ENCODE measurements at regions of chr11 and their contacts with region 1.

Region 1: DNA sequence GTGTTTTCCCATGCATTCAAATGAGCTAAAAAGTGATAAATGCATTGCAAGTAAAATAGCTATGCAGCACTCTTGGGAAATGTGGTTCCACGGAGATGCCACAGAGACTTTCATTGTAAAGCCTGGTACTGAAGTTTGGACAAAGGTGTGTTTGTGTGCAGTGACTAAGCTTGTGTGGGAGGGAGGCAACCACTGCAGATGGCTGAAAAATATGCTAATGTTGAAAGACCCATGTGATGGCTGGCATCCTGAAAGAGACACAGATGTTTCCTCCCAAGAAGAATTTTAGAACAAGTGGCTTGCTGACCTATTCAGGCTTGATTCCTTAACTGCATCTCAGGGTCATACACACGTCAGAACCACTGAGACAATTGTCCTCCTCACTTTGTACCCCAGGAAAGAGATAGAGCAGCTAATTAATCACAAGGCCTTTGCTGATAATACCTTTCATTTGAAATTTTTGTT is 73.8 kb downstream of the FAM76B start:
- DNase-seq: peak; percentile 51
- H3K4me3 Mint-ChIP-seq: no peak overlapping the region
- H3K27ac Mint-ChIP-seq: peak overlapping the region; percentile 75
- H3K4me1 Mint-ChIP-seq: peaks cover 37% of the 10 kb centered on the region
- H3K27me3 Mint-ChIP-seq: no peaks in the 10 kb centered on the region
- CTCF ChIP-seq: no peak

Region 2: GRCh38 chr11:95608093-95608492 is 107.7 kb before region 1 on chr11:
- CTCF ChIA-PET with region 1: no interaction called
- intact Hi-C with region 1: no loop called
- DNase-seq: no peak
- H3K4me3 Mint-ChIP-seq: no peak overlapping the region
- H3K27ac Mint-ChIP-seq: no peak overlapping the region
- H3K4me1 Mint-ChIP-seq: no peaks in the 10 kb centered on the region
- H3K27me3 Mint-ChIP-seq: no peaks in the 10 kb centered on the region
- CTCF ChIP-seq: no peak

Region 3: GRCh38 chr11:95641495-95641894 is 74.3 kb before region 1 on chr11:
- CTCF ChIA-PET with region 1: no interaction called
- intact Hi-C with region 1: no loop called
- DNase-seq: no peak
- H3K4me3 Mint-ChIP-seq: no peak overlapping the region
- H3K27ac Mint-ChIP-seq: no peak overlapping the region
- H3K4me1 Mint-ChIP-seq: no peaks in the 10 kb centered on the region
- H3K27me3 Mint-ChIP-seq: no peaks in the 10 kb centered on the region
- CTCF ChIP-seq: no peak

Region 4: GRCh38 chr11:95705485-95706124 is 10.2 kb before region 1 on chr11:
- CTCF ChIA-PET with region 1: interaction called, 18 read pairs
- intact Hi-C with region 1: no loop called
- DNase-seq: peak; percentile 84
- H3K4me3 Mint-ChIP-seq: no peak overlapping the region
- H3K27ac Mint-ChIP-seq: no peak overlapping the region
- H3K4me1 Mint-ChIP-seq: peaks cover under 1% of the 10 kb centered on the region
- H3K27me3 Mint-ChIP-seq: no peaks in the 10 kb centered on the region
- CTCF ChIP-seq: peak; percentile 65

Region 5: GRCh38 chr11:95739108-95739938 is 23.5 kb after region 1 on chr11:
- CTCF ChIA-PET with region 1: no interaction called
- intact Hi-C with region 1: no loop called
- DNase-seq: no peak
- H3K4me3 Mint-ChIP-seq: no peak overlapping the region
- H3K27ac Mint-ChIP-seq: no peak overlapping the region
- H3K4me1 Mint-ChIP-seq: no peaks in the 10 kb centered on the region
- H3K27me3 Mint-ChIP-seq: no peaks in the 10 kb centered on the region
- CTCF ChIP-seq: no peak

Region 6: GRCh38 chr11:95764267-95764898 is 48.6 kb after region 1 on chr11:
- CTCF ChIA-PET with region 1: interaction called, 5 read pairs
- intact Hi-C with region 1: loop called (anchors 2 kb)
- DNase-seq: no peak
- H3K4me3 Mint-ChIP-seq: no peak overlapping the region
- H3K27ac Mint-ChIP-seq: no peak overlapping the region
- H3K4me1 Mint-ChIP-seq: no peaks in the 10 kb centered on the region
- H3K27me3 Mint-ChIP-seq: no peaks in the 10 kb centered on the region
- CTCF ChIP-seq: peak; percentile 55

Region 7: DNA sequence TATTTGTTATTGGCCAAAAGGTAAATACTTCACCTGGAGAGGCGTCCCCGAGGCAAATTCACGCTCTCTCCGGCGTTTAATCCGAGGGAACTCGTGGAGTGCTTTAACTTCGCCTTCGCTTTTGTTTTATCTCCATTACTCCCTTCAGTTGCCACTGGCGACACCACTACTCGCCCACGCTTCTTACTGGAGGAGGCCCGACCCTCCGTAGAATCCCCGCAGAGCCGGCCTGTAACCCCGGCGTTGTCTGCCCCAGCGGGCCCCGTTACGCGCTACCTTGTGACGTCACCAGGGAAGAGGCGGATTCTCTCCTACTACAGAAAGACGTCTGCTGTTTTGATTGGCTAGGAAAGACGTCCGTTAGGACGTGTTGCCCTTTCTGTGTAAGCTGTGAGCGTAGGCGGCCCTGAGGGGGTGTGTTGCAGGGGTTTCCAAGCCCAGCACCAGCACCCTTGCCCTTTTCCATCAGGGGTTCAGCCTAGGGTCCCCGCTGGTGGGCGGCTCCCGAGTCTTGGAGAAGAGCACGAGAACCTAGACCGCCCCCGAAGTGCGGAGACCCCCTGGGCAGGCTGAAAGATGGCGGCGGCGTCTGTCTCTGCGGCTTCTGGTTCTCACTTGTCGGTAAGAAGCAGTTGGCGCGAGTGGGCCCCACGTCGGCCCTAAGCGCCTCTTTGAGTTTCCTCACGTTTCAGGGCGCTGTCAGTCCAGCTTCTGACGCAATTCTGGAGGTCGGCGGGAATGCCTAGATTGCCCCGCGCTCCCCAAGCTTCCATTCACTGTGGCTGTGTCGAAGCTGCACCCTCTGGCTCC is 74.5 kb after region 1 on chr11 and contains the start of gene CEP57:
- CTCF ChIA-PET with region 1: no interaction called
- intact Hi-C with region 1: loop called (anchors 2 kb)
- DNase-seq: peak; percentile 92
- H3K4me3 Mint-ChIP-seq: peak within 1 kb of the TSS; percentile 73
- H3K27ac Mint-ChIP-seq: peak within 1 kb of the TSS; percentile 60
- H3K4me1 Mint-ChIP-seq: peaks cover 26% of the 10 kb centered on the region
- H3K27me3 Mint-ChIP-seq: no peaks in the 10 kb centered on the region
- CTCF ChIP-seq: no peak
- total RNA-seq, gene CEP57: 58.7 and 59.4 TPM in 2 replicates

Region 8: DNA sequence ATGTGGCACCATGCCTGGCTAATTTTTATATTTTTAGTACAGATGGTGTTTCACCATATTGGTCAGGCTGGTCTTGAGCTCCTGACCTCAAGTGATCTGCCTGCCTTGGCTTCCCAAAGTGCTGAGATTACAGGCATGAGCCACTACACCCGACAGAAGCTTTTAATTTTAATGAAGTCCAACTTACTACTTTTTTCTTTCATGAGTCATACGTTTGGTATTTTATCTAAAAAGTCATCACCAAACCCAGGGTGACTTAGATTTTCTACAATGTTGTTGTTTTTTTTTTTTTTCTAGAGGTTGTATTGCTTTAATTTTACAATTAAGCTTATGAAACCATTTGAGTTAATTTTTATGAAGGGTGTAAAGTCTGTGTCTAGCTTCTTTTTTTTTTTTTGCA is 708.9 kb after region 1 on chr11:
- CTCF ChIA-PET with region 1: no interaction called
- intact Hi-C with region 1: loop called (anchors 2 kb)
- DNase-seq: no peak
- H3K4me3 Mint-ChIP-seq: no peak overlapping the region
- H3K27ac Mint-ChIP-seq: no peak overlapping the region
- H3K4me1 Mint-ChIP-seq: peaks cover 22% of the 10 kb centered on the region
- H3K27me3 Mint-ChIP-seq: no peaks in the 10 kb centered on the region
- CTCF ChIP-seq: no peak